GM12878 (cell line): ENCODE measurements at regions of chr10 and their contacts with region 1.

Region 1: GRCh38 chr10:63268798-63269503 is 135.8 kb downstream of the NRBF2 start:
- DNase-seq: peak; percentile 95
- ATAC-seq: peak; percentile 87
- H3K4me3 ChIP-seq: peak overlapping the region; percentile 91
- H3K27ac ChIP-seq: peak overlapping the region; percentile 80
- H3K4me1 ChIP-seq: peaks cover 18% of the 10 kb centered on the region
- H3K27me3 ChIP-seq: no peaks in the 10 kb centered on the region
- CTCF ChIP-seq: peak in 1 of 3 experiments; percentile 30; a peak in 1 of 6 replicates
- EP300 ChIP-seq: peak; percentile 83 to 84; a peak in 3 of 4 replicates
- POLR2A ChIP-seq: peak; percentile 99
- RAD21 ChIP-seq: no peak

Region 2: DNA sequence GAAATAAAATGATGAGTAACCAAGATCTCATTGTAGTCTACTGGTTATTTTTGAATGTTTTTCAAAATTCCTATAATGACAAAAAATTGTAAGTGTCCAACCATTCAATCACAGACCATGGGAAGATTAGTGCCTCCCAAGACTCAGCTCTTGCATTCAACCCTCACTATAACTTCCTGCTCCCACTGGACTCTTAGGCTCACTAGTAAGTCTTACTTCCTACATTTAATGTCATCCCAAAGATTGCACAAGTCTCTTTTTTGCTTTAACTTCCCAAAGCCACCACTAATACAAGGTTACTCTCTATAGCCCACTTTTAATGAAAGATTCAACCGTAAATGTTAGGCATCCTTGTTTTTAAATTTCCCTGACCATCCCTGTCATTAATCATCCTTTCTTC is 247.7 kb before region 1 on chr10:
- CTCF ChIA-PET with region 1: no interaction called
- POLR2A ChIA-PET with region 1: no interaction called
- RAD21 ChIA-PET with region 1: no interaction called
- SMC1A ChIA-PET with region 1: no interaction called
- in situ Hi-C with region 1: no loop called
- intact Hi-C with region 1: no loop called
- DNase-seq: no peak
- ATAC-seq: no peak
- H3K4me3 ChIP-seq: no peak overlapping the region
- H3K27ac ChIP-seq: no peak overlapping the region
- H3K4me1 ChIP-seq: no peaks in the 10 kb centered on the region
- H3K27me3 ChIP-seq: no peaks in the 10 kb centered on the region
- CTCF ChIP-seq: no peak
- EP300 ChIP-seq: no peak
- POLR2A ChIP-seq: no peak
- RAD21 ChIP-seq: no peak

Region 3: GRCh38 chr10:63217120-63217605 is 51.8 kb before region 1 on chr10:
- CTCF ChIA-PET with region 1: interaction called, 27 read pairs
- POLR2A ChIA-PET with region 1: interaction called, 4 read pairs
- RAD21 ChIA-PET with region 1: interaction called, 20 read pairs
- SMC1A ChIA-PET with region 1: interaction called, 46 read pairs
- in situ Hi-C with region 1: no loop called
- intact Hi-C with region 1: no loop called
- DNase-seq: no peak
- ATAC-seq: peak; percentile 86
- H3K4me3 ChIP-seq: no peak overlapping the region
- H3K27ac ChIP-seq: peak overlapping the region; percentile 39; the same call in 1 of the 2 replicates
- H3K4me1 ChIP-seq: peaks cover 5% of the 10 kb centered on the region; the same call in 1 of the 2 replicates
- H3K27me3 ChIP-seq: no peaks in the 10 kb centered on the region
- CTCF ChIP-seq: peak; percentile 43 to 67 (median 47); a peak in 5 of 6 replicates
- EP300 ChIP-seq: no peak
- POLR2A ChIP-seq: no peak
- RAD21 ChIP-seq: peak; percentile 76

Region 4: DNA sequence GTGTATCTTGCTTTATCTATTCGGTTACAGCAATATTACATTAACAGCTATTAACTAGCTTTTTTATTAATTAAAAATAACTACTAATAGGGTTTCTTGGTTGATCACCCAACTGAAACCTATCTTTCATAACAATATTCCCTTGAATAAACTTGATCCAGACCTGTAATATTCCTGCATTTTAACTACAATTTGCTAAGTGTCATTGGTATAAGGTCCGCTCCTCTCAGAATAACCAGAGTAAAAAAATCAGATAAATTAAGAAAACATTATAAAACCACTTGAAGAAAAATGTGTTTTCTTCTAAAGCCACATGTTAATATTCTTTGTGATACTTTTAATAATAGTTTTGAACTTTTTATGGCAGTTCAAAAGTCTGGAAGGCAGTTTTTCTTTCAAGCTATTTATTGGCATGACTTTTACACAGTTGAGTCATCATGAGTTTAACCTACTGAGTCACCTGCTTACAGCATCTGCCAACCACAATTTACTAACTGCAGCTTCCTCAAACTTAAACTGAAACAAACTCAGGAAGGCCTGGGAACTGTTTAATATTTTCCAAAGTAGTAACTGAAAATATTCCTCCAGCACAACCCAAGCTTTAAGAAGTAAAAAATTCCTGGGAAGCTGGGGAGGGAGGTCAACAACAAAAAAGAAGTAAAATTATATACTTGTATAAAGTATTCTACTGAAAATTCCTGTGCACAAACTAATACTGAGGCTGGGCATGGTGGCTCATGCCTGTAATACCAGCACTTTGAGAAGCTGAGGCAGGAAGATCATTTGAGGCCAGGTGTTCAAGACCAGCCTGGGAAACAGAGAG is 32.6 kb before region 1 on chr10:
- CTCF ChIA-PET with region 1: interaction called, 7 read pairs
- POLR2A ChIA-PET with region 1: interaction called, 12 read pairs
- RAD21 ChIA-PET with region 1: interaction called, 26 read pairs
- SMC1A ChIA-PET with region 1: interaction called, 36 read pairs
- in situ Hi-C with region 1: no loop called
- intact Hi-C with region 1: no loop called
- DNase-seq: no peak
- ATAC-seq: peak; percentile 87
- H3K4me3 ChIP-seq: no peak overlapping the region
- H3K27ac ChIP-seq: peak overlapping the region; percentile 56
- H3K4me1 ChIP-seq: peaks cover 5% of the 10 kb centered on the region; the same call in 1 of the 2 replicates
- H3K27me3 ChIP-seq: no peaks in the 10 kb centered on the region
- CTCF ChIP-seq: no peak
- EP300 ChIP-seq: peak; percentile 54 to 70; a peak in 3 of 4 replicates
- POLR2A ChIP-seq: no peak
- RAD21 ChIP-seq: no peak

Region 5: GRCh38 chr10:63286754-63287264 is 17.9 kb after region 1 on chr10:
- CTCF ChIA-PET with region 1: interaction called, 19 read pairs
- POLR2A ChIA-PET with region 1: interaction called, 15 read pairs
- RAD21 ChIA-PET with region 1: interaction called, 34 read pairs
- SMC1A ChIA-PET with region 1: interaction called, 44 read pairs
- in situ Hi-C with region 1: no loop called
- intact Hi-C with region 1: loop called (anchors 2 kb)
- DNase-seq: peak; percentile 66
- ATAC-seq: peak; percentile 83
- H3K4me3 ChIP-seq: peak overlapping the region; percentile 19; the same call in 1 of the 2 replicates
- H3K27ac ChIP-seq: peak overlapping the region; percentile 73
- H3K4me1 ChIP-seq: peaks cover 32% of the 10 kb centered on the region
- H3K27me3 ChIP-seq: no peaks in the 10 kb centered on the region
- CTCF ChIP-seq: no peak
- EP300 ChIP-seq: peak; percentile 24 to 69; a peak in 1 of 4 replicates
- POLR2A ChIP-seq: no peak
- RAD21 ChIP-seq: no peak

Region 6: GRCh38 chr10:63313066-63313717 is 44.2 kb after region 1 on chr10:
- CTCF ChIA-PET with region 1: no interaction called
- POLR2A ChIA-PET with region 1: no interaction called
- RAD21 ChIA-PET with region 1: no interaction called
- SMC1A ChIA-PET with region 1: no interaction called
- in situ Hi-C with region 1: no loop called
- intact Hi-C with region 1: no loop called
- DNase-seq: no peak
- ATAC-seq: no peak
- H3K4me3 ChIP-seq: no peak overlapping the region
- H3K27ac ChIP-seq: no peak overlapping the region
- H3K4me1 ChIP-seq: no peaks in the 10 kb centered on the region
- H3K27me3 ChIP-seq: no peaks in the 10 kb centered on the region
- CTCF ChIP-seq: no peak
- EP300 ChIP-seq: no peak
- POLR2A ChIP-seq: no peak
- RAD21 ChIP-seq: no peak

Region 7: GRCh38 chr10:63376560-63377304 is 107.8 kb after region 1 on chr10:
- CTCF ChIA-PET with region 1: no interaction called
- POLR2A ChIA-PET with region 1: no interaction called
- RAD21 ChIA-PET with region 1: interaction called, 7 read pairs
- SMC1A ChIA-PET with region 1: interaction called, 4 read pairs
- in situ Hi-C with region 1: no loop called
- intact Hi-C with region 1: loop called (anchors 5 kb)
- DNase-seq: peak; percentile 64
- ATAC-seq: peak; percentile 98
- H3K4me3 ChIP-seq: peak overlapping the region; percentile 8
- H3K27ac ChIP-seq: peak overlapping the region; percentile 47
- H3K4me1 ChIP-seq: peaks cover 7% of the 10 kb centered on the region
- H3K27me3 ChIP-seq: no peaks in the 10 kb centered on the region
- CTCF ChIP-seq: no peak
- EP300 ChIP-seq: 0 out of 4 replicates have a peak, but pooled peaks of 1 of the 2 experiments have one; percentile 30
- POLR2A ChIP-seq: no peak
- RAD21 ChIP-seq: no peak

Region 8: GRCh38 chr10:63521416-63522276 is 252.7 kb after region 1 on chr10:
- CTCF ChIA-PET with region 1: interaction called, 3 read pairs
- POLR2A ChIA-PET with region 1: interaction called, 3 read pairs
- RAD21 ChIA-PET with region 1: interaction called, 9 read pairs
- SMC1A ChIA-PET with region 1: interaction called, 9 read pairs
- in situ Hi-C with region 1: no loop called
- intact Hi-C with region 1: loop called (anchors 5 kb)
- DNase-seq: no peak
- ATAC-seq: peak; percentile 71
- H3K4me3 ChIP-seq: peak overlapping the region; percentile 89
- H3K27ac ChIP-seq: peak overlapping the region; percentile 92
- H3K4me1 ChIP-seq: peaks cover 12% of the 10 kb centered on the region; the same call in 1 of the 2 replicates
- H3K27me3 ChIP-seq: no peaks in the 10 kb centered on the region
- CTCF ChIP-seq: no peak
- EP300 ChIP-seq: no peak
- POLR2A ChIP-seq: peak; percentile 69
- RAD21 ChIP-seq: 0 out of 2 replicates have a peak, but pooled peaks have one; percentile 4

Region 9: GRCh38 chr10:63547628-63548360 is 278.8 kb after region 1 on chr10:
- CTCF ChIA-PET with region 1: no interaction called
- POLR2A ChIA-PET with region 1: no interaction called
- RAD21 ChIA-PET with region 1: no interaction called
- SMC1A ChIA-PET with region 1: no interaction called
- in situ Hi-C with region 1: no loop called
- intact Hi-C with region 1: no loop called
- DNase-seq: no peak
- ATAC-seq: no peak; the same call in 2 of the 3 replicates
- H3K4me3 ChIP-seq: no peak overlapping the region
- H3K27ac ChIP-seq: no peak overlapping the region
- H3K4me1 ChIP-seq: no peaks in the 10 kb centered on the region
- H3K27me3 ChIP-seq: no peaks in the 10 kb centered on the region
- CTCF ChIP-seq: no peak
- EP300 ChIP-seq: no peak
- POLR2A ChIP-seq: no peak
- RAD21 ChIP-seq: no peak

Region 10: GRCh38 chr10:64059884-64060283 is 790.9 kb after region 1 on chr10:
- CTCF ChIA-PET with region 1: no interaction called
- POLR2A ChIA-PET with region 1: no interaction called
- RAD21 ChIA-PET with region 1: no interaction called
- SMC1A ChIA-PET with region 1: no interaction called
- in situ Hi-C with region 1: no loop called
- intact Hi-C with region 1: no loop called
- DNase-seq: no peak
- ATAC-seq: no peak
- H3K4me3 ChIP-seq: no peak overlapping the region
- H3K27ac ChIP-seq: no peak overlapping the region
- H3K4me1 ChIP-seq: no peaks in the 10 kb centered on the region
- H3K27me3 ChIP-seq: no peaks in the 10 kb centered on the region
- CTCF ChIP-seq: no peak
- EP300 ChIP-seq: no peak
- POLR2A ChIP-seq: no peak
- RAD21 ChIP-seq: no peak